ENCODE measurements at regions of chr17 and their contacts with region 1.

Region 1: DNA sequence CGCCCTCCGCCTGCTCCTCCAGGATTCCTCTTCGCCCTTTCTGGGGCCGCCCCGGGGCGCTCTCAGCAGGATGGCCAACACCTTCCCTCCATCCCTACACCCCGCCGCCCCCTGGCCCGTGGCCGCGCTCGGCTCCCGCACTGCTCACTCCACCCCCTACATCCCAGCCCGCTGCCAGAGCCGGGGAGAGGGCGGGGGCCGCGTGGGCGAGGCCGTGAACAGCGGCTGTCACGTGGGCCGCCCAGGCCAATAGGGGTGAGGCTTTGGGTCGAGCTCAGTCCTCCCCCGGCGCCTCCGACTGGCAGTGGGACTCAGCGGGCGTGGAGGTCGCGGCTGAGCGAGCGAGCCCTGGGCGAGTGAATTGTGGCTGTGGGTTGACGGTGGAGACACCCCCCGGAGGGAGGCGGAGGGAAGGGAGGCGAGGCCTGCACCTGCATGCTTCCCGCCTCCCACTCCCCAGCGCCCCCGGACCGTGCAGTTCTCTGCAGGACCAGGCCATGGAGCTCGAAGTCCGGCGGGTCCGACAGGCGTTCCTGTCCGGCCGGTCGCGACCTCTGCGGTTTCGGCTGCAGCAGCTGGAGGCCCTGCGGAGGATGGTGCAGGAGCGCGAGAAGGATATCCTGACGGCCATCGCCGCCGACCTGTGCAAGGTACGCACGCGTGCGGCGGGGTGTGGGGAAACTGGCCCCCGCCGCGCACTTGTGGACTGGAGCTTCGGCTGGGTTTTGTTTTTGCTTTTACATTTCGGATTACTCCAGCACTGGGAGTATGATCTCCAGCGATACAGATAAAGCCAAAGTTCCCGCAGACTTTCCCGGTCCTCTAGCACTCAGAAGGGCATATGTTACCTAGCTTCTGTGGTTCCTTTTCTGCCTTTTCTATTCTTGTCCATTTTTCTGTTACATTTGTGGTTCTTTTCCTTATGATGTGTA is at the start of gene ALDH3A2:
- DNase-seq: peak; percentile 79
- ATAC-seq: peak; percentile 96
- H3K4me3 ChIP-seq: peak within 1 kb of the TSS; percentile 72
- H3K27ac ChIP-seq: peak within 1 kb of the TSS; percentile 64
- H3K4me1 ChIP-seq: peaks cover 8% of the 10 kb centered on the region
- H3K27me3 ChIP-seq: peaks cover 26% of the 10 kb centered on the region
- CTCF ChIP-seq: no peak
- POLR2A ChIP-seq: peak; percentile 52; the same call in 1 of the 2 replicates
- RAD21 ChIP-seq: no peak
- total RNA-seq, gene ALDH3A2: 6.9 and 7.9 TPM in 2 replicates

Region 2: GRCh38 chr17:19513897-19514488 is 134.7 kb before region 1 on chr17:
- CTCF ChIA-PET with region 1: no interaction called
- POLR2A ChIA-PET with region 1: no interaction called
- dilution Hi-C with region 1: no loop called
- in situ Hi-C with region 1: no loop called
- intact Hi-C with region 1: loop called (anchors 2 kb)
- DNase-seq: peak; percentile 60
- ATAC-seq: peak; percentile 94
- H3K4me3 ChIP-seq: no peak overlapping the region
- H3K27ac ChIP-seq: no peak overlapping the region
- H3K4me1 ChIP-seq: no peaks in the 10 kb centered on the region
- H3K27me3 ChIP-seq: peaks cover 2% of the 10 kb centered on the region
- CTCF ChIP-seq: peak; percentile 93
- POLR2A ChIP-seq: no peak
- RAD21 ChIP-seq: peak; percentile 90

Region 3: DNA sequence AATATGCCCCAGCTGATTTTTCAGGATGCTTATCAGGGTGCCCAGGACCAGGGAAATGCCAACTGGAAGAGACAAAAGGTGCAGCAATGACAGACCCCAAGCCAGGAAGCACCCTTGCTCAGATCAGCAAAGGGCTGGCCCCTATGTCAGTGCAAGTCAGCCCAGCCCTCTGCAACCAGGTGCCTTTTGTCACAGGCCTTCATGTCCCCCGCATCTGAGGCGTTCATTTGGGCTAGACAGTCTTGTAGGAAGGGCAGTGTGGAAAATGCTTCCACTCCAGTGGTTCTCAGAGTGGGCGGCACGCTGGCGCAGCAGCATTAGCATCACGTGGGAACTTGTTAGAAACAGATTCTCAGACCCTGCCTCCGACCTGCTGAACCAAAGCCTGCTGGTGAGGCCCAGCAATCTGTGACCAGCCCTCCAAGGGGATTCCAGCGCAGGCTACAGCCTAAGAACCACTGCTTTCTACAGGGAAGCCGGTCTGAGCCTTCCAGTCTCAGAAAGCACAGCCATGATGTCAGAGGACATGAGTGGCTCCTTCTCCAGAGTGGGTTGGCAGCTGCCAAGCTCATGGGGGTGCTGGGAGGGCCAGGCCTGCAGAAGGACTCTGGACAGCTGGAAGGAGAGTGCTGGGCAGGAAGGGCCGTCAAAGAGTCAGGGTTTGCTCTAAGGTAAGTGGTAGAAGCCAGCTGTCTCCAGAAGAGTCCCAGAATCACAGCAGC is 54.5 kb after region 1 on chr17:
- CTCF ChIA-PET with region 1: no interaction called
- POLR2A ChIA-PET with region 1: no interaction called
- dilution Hi-C with region 1: no loop called
- in situ Hi-C with region 1: no loop called
- intact Hi-C with region 1: no loop called
- DNase-seq: no peak
- ATAC-seq: peak; percentile 29; the same call in 1 of the 2 replicates
- H3K4me3 ChIP-seq: no peak overlapping the region
- H3K27ac ChIP-seq: no peak overlapping the region
- H3K4me1 ChIP-seq: no peaks in the 10 kb centered on the region; the same call in 1 of the 2 replicates
- H3K27me3 ChIP-seq: peaks cover 18% of the 10 kb centered on the region
- CTCF ChIP-seq: no peak
- POLR2A ChIP-seq: no peak
- RAD21 ChIP-seq: no peak

Region 4: DNA sequence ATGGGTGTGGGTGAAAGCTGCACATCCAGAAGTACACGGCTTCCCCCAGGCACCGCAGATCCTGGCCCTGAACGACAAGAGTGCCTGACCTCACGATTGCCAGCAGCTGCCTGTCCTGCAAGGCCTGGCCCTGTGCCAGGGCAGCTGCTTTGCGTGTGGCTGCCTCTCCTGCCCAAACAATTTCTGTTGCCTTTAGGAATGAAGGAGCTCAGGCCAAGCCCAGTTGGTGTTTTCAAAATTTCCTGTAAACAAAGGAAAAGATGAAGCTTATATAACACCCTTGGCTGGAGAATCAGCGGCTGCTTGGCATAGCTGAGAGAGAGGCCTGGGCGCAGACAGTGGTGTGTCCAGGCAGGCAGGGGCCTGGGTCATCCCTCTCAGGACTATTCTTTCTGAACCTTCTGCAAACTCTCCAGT is 79.3 kb after region 1 on chr17:
- CTCF ChIA-PET with region 1: no interaction called
- POLR2A ChIA-PET with region 1: interaction called, 16 read pairs
- dilution Hi-C with region 1: no loop called
- in situ Hi-C with region 1: no loop called
- intact Hi-C with region 1: no loop called
- DNase-seq: peak; percentile 63
- ATAC-seq: peak; percentile 84
- H3K4me3 ChIP-seq: no peak overlapping the region
- H3K27ac ChIP-seq: peak overlapping the region; percentile 77; the same call in 1 of the 2 replicates
- H3K4me1 ChIP-seq: peaks cover 11% of the 10 kb centered on the region; the same call in 1 of the 2 replicates
- H3K27me3 ChIP-seq: peaks cover 20% of the 10 kb centered on the region
- CTCF ChIP-seq: no peak
- POLR2A ChIP-seq: no peak
- RAD21 ChIP-seq: no peak